MCF 10A (cell line): ENCODE measurements at regions of chr5 and their contacts with region 1.

Region 1: DNA sequence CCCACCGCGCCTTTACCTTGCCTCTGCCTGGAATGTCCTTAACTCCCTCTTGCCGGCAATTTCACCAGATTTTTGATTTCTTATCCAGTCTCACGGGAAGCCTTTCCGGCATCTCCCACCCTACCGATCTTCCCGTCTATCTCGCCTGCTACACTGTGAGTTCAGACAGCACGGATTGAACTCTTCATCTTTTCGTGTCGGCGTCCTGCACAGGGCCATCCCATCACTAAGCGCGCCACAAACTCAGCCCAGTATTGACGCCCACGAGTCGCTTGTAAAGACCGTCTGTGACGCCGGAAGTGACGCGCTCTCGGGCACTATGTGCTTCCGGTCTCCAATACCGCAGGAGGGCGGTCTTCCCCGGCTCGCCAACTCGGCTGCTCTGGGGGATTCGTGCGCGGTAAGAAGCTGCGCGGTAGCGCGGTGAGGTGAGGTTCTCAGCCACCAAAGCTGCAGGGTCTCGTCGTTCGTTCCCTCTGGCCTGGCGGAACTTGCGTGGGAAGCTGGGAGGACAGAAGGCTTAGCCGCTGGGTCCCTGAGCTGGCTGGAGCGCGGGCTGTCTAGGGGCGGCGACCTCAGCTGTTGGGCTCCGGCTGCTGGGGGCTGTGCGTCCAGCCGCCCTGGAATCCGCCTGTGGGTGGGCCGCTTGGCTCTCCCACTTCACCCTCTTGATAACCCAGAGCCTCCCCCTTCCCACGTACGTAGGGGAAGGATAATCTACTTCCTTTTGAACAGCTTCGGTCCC is at the start of gene ZCCHC9:
- DNase-seq: peak; percentile 93
- H3K4me3 Mint-ChIP-seq: peak within 1 kb of the TSS; percentile 87
- H3K27ac Mint-ChIP-seq: peak within 1 kb of the TSS; percentile 95
- H3K4me1 Mint-ChIP-seq: peaks cover 22% of the 10 kb centered on the region
- H3K27me3 Mint-ChIP-seq: no peaks in the 10 kb centered on the region
- CTCF ChIP-seq: no peak
- total RNA-seq, gene ZCCHC9: 31.5 and 33.8 TPM in 2 replicates

Region 2: GRCh38 chr5:80686757-80687156 is 614.7 kb before region 1 on chr5:
- CTCF ChIA-PET with region 1: interaction called, 3 read pairs
- POLR2A ChIA-PET with region 1: no interaction called
- intact Hi-C with region 1: loop called (anchors 2 kb)
- DNase-seq: peak; percentile 25
- H3K4me3 Mint-ChIP-seq: no peak overlapping the region
- H3K27ac Mint-ChIP-seq: no peak overlapping the region
- H3K4me1 Mint-ChIP-seq: no peaks in the 10 kb centered on the region
- H3K27me3 Mint-ChIP-seq: no peaks in the 10 kb centered on the region
- CTCF ChIP-seq: peak; percentile 29

Region 3: GRCh38 chr5:80781356-80781755 is 520.1 kb before region 1 on chr5:
- CTCF ChIA-PET with region 1: no interaction called
- POLR2A ChIA-PET with region 1: no interaction called
- intact Hi-C with region 1: no loop called
- DNase-seq: peak; percentile 33
- H3K4me3 Mint-ChIP-seq: no peak overlapping the region
- H3K27ac Mint-ChIP-seq: no peak overlapping the region
- H3K4me1 Mint-ChIP-seq: peaks cover 7% of the 10 kb centered on the region
- H3K27me3 Mint-ChIP-seq: no peaks in the 10 kb centered on the region
- CTCF ChIP-seq: no peak

Region 4: GRCh38 chr5:81194633-81195333 is 106.7 kb before region 1 on chr5:
- CTCF ChIA-PET with region 1: interaction called, 26 read pairs
- POLR2A ChIA-PET with region 1: interaction called, 3 read pairs
- intact Hi-C with region 1: no loop called
- DNase-seq: peak; percentile 82
- H3K4me3 Mint-ChIP-seq: no peak overlapping the region
- H3K27ac Mint-ChIP-seq: no peak overlapping the region
- H3K4me1 Mint-ChIP-seq: peaks cover 4% of the 10 kb centered on the region
- H3K27me3 Mint-ChIP-seq: peaks cover 29% of the 10 kb centered on the region
- CTCF ChIP-seq: peak; percentile 95

Region 5: DNA sequence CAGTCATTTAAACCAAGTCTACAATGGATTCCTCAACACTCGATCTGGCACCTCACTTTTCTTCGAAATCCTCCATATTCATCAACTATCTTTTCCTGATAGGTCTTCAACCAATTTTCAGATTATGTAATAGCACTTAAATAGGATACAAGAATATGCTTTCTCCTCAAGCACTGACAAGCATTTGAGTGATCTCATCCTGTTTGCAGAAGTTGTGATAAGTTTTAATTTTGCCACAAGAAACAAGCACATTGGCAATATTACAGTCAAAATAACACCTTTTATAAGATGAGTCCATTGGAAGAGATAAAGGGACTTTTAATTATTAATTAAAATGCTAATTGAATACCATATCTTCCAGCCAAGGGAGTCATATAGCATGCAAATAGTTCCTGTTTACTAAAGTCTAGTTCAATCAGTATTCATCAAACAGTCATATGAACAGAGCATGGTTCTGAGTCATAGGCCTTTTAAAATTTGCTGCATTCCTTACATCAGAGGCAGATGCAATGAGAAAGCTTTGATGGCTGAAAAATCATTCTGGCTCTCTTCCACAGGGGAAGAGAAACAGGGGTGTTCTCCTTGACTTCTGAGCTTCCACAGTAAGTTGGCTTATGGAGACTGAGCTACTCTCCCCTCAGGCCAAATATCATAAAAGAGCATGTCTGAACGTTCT is 32.8 kb before region 1 on chr5:
- CTCF ChIA-PET with region 1: interaction called, 12 read pairs
- POLR2A ChIA-PET with region 1: interaction called, 13 read pairs
- intact Hi-C with region 1: no loop called
- DNase-seq: peak; percentile 56
- H3K4me3 Mint-ChIP-seq: no peak overlapping the region
- H3K27ac Mint-ChIP-seq: peak overlapping the region; percentile 49
- H3K4me1 Mint-ChIP-seq: peaks cover 10% of the 10 kb centered on the region
- H3K27me3 Mint-ChIP-seq: no peaks in the 10 kb centered on the region
- CTCF ChIP-seq: no peak

Region 6: GRCh38 chr5:82225525-82226172 is 924.2 kb after region 1 on chr5:
- CTCF ChIA-PET with region 1: no interaction called
- POLR2A ChIA-PET with region 1: no interaction called
- intact Hi-C with region 1: loop called (anchors 10 kb)
- DNase-seq: peak; percentile 75
- H3K4me3 Mint-ChIP-seq: no peak overlapping the region
- H3K27ac Mint-ChIP-seq: no peak overlapping the region
- H3K4me1 Mint-ChIP-seq: peaks cover 12% of the 10 kb centered on the region
- H3K27me3 Mint-ChIP-seq: no peaks in the 10 kb centered on the region
- CTCF ChIP-seq: peak; percentile 85